ENCODE measurements at regions of chr16 and their contacts with region 1.

Region 1: DNA sequence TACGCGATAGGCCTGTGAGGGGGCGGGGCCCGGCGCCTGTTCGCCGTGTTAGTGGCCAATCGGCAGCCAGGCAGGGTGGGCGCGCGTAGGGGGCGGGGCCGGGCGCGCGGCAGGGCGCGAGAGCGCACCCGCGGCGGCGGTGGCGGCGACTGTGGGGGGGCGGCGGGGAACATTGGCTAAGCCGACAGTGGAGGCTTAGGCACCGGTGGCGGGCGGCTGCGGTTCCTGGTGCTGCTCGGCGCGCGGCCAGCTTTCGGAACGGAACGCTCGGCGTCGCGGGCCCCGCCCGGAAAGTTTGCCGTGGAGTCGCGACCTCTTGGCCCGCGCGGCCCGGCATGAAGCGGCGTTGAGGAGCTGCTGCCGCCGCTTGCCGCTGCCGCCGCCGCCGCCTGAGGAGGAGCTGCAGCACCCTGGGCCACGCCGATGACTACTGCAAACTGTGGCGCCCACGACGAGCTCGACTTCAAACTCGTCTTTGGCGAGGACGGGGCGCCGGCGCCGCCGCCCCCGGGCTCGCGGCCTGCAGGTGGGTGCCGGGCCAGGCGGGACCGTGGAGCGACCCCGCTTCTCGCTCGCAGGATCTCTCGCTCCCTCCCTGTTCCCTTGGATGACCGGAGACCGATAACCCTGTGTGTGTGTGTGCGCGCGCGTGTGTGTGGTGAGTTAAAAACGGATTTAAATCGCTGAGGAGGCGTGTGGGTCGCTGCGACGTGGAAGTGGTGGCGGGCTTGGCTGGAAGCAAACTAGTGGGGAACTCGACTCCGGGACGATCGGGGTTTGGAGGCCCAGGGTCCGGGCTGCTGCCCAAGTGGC is at the start of gene NFATC3:
- DNase-seq: peak; percentile 93
- H3K4me3 ChIP-seq: peak within 1 kb of the TSS; percentile 73 to 84 (median 83)
- H3K27ac ChIP-seq: peak within 1 kb of the TSS; percentile 52
- H3K4me1 ChIP-seq: peaks cover 29% of the 10 kb centered on the region
- H3K27me3 ChIP-seq: no peaks in the 10 kb centered on the region
- CTCF ChIP-seq: no peak
- total RNA-seq, gene NFATC3: 19.2 to 27.3 TPM

Region 2: DNA sequence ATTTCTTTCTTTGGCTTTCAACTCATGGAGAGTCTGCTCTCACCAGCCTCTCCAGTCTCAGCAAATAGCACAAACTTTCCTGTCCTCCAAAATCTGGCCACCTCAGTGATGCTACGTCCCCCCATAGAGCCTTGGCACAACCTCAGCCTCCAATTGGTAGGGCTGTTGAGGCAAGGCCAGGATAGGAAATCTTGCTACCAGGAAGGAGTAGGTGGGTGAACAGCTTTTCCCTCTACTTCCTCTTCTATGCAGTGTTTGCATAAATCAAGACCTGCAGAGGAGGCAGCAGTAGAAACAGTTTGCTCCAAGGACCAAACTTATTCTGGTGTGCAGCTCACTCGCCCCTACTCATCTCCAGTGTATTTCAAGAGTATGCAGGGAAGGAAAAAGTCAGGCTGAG is 85.5 kb before region 1 on chr16:
- CTCF ChIA-PET with region 1: no interaction called
- dilution Hi-C with region 1: no loop called
- in situ Hi-C with region 1: no loop called
- intact Hi-C with region 1: no loop called
- DNase-seq: no peak
- H3K4me3 ChIP-seq: no peak overlapping the region
- H3K27ac ChIP-seq: no peak overlapping the region
- H3K4me1 ChIP-seq: no peaks in the 10 kb centered on the region
- H3K27me3 ChIP-seq: no peaks in the 10 kb centered on the region
- CTCF ChIP-seq: no peak

Region 3: DNA sequence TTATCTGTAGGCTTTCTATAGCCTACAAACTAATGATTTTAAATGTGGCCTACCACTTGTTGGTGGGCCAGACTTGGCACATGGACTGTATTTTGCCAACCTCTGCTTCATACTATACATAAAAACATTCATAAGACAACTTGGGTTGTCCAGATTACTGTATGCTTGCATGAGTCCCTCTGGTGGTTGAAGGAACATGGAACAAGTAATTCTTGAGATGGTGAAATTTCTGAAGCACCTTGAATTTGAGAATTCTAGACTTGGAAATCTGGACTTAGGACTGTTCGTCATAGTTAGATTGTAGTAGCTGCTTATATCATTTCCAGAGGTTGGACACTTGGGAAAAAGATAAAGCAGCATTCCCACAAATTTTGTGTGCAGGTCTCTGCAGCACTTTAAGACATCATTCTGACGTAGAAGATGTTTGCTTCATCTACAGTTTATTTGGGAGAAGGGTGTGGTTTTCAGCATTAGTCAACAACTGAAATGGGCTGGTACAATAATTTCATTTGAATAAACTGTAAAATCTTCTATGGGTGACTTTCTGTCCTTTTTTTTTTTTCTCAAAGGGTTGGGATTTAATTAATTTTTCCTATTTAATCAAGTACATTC is 30.9 kb after region 1 on chr16:
- CTCF ChIA-PET with region 1: interaction called, 6 read pairs
- dilution Hi-C with region 1: no loop called
- in situ Hi-C with region 1: no loop called
- intact Hi-C with region 1: loop called (anchors 2 kb)
- DNase-seq: peak; percentile 20
- H3K4me3 ChIP-seq: no peak overlapping the region
- H3K27ac ChIP-seq: no peak overlapping the region
- H3K4me1 ChIP-seq: no peaks in the 10 kb centered on the region
- H3K27me3 ChIP-seq: no peaks in the 10 kb centered on the region
- CTCF ChIP-seq: peak; percentile 50 to 71

Region 4: GRCh38 chr16:68237243-68238028 is 152.0 kb after region 1 on chr16:
- CTCF ChIA-PET with region 1: no interaction called
- dilution Hi-C with region 1: no loop called
- in situ Hi-C with region 1: no loop called
- intact Hi-C with region 1: loop called (anchors 2 kb)
- DNase-seq: peak; percentile 99
- H3K4me3 ChIP-seq: peak overlapping the region; percentile 67 to 69 (median 67)
- H3K27ac ChIP-seq: peak overlapping the region; percentile 82
- H3K4me1 ChIP-seq: peaks cover 36% of the 10 kb centered on the region
- H3K27me3 ChIP-seq: no peaks in the 10 kb centered on the region
- CTCF ChIP-seq: no peak

Region 5: GRCh38 chr16:68310761-68311511 is 225.5 kb after region 1 on chr16 and contains the starts of genes PRMT7 and SLC7A6OS:
- CTCF ChIA-PET with region 1: no interaction called
- dilution Hi-C with region 1: no loop called
- in situ Hi-C with region 1: no loop called
- intact Hi-C with region 1: loop called (anchors 5 kb)
- DNase-seq: peak; percentile 88
- H3K4me3 ChIP-seq: peak within 1 kb of the TSS; percentile 79 to 98 (median 86)
- H3K27ac ChIP-seq: peak within 1 kb of the TSS; percentile 62
- H3K4me1 ChIP-seq: peaks cover 10% of the 10 kb centered on the region
- H3K27me3 ChIP-seq: no peaks in the 10 kb centered on the region
- CTCF ChIP-seq: peak in 1 of 2 donors; percentile 14
- total RNA-seq, gene PRMT7: 31.9 to 38.3 TPM
- total RNA-seq, gene SLC7A6OS: 11.5 to 15.6 TPM